ENCODE measurements at regions of chr5 and their contacts with region 1.

Region 1: GRCh38 chr5:77426670-77427069 is 65.4 kb downstream of the WDR41 start:
- H3K4me3 ChIP-seq: no peak overlapping the region
- H3K27ac ChIP-seq: no peak overlapping the region
- H3K4me1 ChIP-seq: 0 out of 2 replicates have a peak, but pooled peaks cover 4% of the 10 kb centered on the region
- CTCF ChIP-seq: no peak

Region 2: GRCh38 chr5:77437194-77437593 is 10.5 kb after region 1 on chr5:
- CTCF ChIA-PET with region 1: interaction called, 20 read pairs
- POLR2A ChIA-PET with region 1: no interaction called
- H3K4me3 ChIP-seq: no peak overlapping the region
- H3K27ac ChIP-seq: no peak overlapping the region
- H3K4me1 ChIP-seq: no peaks in the 10 kb centered on the region
- CTCF ChIP-seq: peak; percentile 32